ENCODE measurements at regions of chr7 and their contacts with region 1.

Region 1: DNA sequence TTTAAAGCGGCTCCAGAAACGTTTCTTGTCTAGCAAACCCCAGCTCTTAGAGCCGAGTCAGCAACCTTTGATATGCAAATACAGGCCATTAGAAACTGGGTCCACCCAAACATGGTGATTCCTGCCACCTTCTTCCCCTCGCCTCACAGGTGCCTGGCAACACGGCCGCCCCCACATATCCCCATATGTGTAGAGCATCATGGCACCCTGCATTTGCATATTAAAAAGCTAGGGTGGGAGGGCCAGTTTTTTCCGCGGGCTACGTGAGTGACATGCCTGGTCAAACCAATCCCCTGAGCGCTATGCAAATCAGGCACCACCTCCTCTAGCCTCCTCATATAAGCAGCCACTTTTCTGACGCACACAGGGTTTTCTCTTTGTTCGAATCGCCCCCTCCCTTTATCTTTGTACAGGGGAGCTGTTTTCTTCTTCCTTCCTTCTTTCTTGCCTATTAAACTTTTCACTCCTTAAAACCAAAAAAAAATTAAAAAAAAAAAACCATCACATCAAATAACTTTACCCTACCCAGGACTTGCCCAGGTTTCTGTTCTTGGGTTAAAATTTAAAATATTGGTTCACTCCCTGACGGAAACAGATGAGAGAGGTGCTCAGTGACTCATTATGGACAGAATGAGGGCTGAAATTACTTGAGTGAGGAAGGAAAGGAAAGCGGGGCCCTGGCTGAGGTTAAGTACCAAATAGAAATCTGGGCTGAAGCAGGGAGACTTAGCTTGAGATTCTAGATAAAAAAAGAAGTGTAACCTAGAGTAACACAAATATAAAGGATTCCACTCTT is 59.8 kb downstream of the COA1 start:
- DNase-seq: no peak
- H3K4me3 ChIP-seq: no peak overlapping the region
- H3K27ac ChIP-seq: no peak overlapping the region
- H3K4me1 ChIP-seq: peaks cover 0 to 12% of the 10 kb centered on the region in 2 donors
- H3K27me3 ChIP-seq: no peaks in the 10 kb centered on the region
- CTCF ChIP-seq: no peak

Region 2: DNA sequence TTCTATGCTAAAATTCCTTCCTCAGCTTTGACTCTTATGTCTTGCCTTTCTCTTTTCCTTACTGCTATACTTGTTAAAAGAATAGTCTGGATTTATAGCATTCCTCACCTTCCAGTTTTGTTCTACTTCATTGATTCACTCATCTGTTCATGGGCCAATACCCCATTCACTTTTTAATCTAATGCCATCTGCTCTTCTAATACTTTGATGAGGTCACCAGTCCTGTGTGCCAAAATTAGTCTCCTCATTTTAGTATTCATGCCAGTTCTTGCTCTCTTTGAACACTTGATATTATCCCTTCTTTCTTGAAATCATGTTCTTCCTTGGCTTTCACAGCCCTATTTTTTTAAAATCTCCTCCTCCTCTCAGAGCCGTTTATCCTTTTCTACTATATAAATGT is 67.2 kb before region 1 on chr7:
- intact Hi-C with region 1: no loop called
- DNase-seq: no peak
- H3K4me3 ChIP-seq: no peak overlapping the region
- H3K27ac ChIP-seq: no peak overlapping the region
- H3K4me1 ChIP-seq: peaks cover 0 to 7% of the 10 kb centered on the region in 2 donors
- H3K27me3 ChIP-seq: no peaks in the 10 kb centered on the region
- CTCF ChIP-seq: no peak

Region 3: DNA sequence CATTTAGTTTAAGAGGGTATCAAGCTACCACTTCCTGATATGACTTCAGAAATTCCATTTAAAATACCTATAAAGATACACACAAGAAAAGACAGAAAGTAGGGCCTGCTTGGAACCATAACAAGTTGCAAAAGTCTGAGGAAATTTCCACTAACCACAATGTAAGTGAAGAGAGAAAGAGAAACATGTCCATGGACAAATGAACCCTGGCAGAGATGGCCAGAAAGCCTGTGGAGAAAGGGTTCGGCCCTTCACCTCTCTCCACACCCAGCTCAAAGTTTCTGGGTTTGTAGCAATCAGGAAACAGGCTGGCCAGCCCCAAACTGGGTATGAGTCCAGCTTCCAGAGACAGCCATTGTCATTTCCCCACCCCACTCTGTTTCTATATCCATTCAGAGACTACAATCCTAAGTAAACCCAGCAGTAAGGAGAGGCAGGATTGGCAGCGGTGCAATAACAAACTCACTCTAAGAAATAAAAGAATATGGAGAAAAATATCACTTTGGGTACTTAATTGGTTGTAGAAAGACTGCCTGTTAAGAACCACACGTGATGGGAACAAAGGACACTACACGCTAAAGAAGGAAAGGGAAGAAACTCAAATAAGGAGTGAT is 15.5 kb before region 1 on chr7:
- intact Hi-C with region 1: loop called (anchors 2 kb)
- DNase-seq: no peak
- H3K4me3 ChIP-seq: no peak overlapping the region
- H3K27ac ChIP-seq: no peak overlapping the region
- H3K4me1 ChIP-seq: peaks cover 19 to 38% of the 10 kb centered on the region in 2 donors
- H3K27me3 ChIP-seq: no peaks in the 10 kb centered on the region
- CTCF ChIP-seq: no peak

Region 4: DNA sequence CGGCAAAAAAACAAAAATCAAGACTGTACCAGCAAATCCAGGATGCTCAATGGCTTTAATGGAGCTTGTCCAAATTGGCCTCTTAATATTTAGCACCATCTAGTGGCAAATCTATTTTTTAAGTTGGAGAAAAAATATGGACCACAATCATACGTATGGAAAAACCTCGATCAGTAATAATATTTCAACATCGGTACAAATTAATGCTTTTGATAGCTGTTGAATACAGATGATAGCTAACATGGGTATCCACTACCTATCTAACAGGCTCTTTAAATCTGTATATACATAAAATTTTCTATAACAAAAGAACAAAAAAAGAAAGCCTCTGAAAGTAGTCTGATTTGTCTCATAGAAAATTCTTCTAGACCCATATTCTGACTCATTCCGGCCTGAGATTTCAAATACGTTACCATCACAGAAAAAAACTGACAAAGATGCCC is 30.6 kb after region 1 on chr7:
- intact Hi-C with region 1: no loop called
- DNase-seq: no peak
- H3K4me3 ChIP-seq: peak overlapping the region in 1 of 2 donors; percentile 39
- H3K27ac ChIP-seq: no peak overlapping the region
- H3K4me1 ChIP-seq: no peaks in the 10 kb centered on the region
- H3K27me3 ChIP-seq: no peaks in the 10 kb centered on the region
- CTCF ChIP-seq: peak; percentile 56 to 75 (median 60)

Measured in ascending aorta (tissue), 2 donors.